ENCODE measurements at regions of chr17 and their contacts with region 1.

Region 1: GRCh38 chr17:10875979-10876555 is 38.2 kb upstream of the PIRT start:
- ATAC-seq: peak; percentile 49 to 86 (median 61)
- H3K4me3 ChIP-seq: no peak overlapping the region
- H3K27ac ChIP-seq: no peak overlapping the region
- H3K4me1 ChIP-seq: peaks cover 0 to 6% of the 10 kb centered on the region in 2 donors

Region 2: GRCh38 chr17:10646392-10646990 is 229.6 kb before region 1 on chr17:
- in situ Hi-C with region 1: loop called in 1 of 9 experiments (anchors 25 kb)
- ATAC-seq: peak; percentile 65 to 96 (median 78)
- H3K4me3 ChIP-seq: no peak overlapping the region
- H3K27ac ChIP-seq: no peak overlapping the region
- H3K4me1 ChIP-seq: peaks cover 0 to 3% of the 10 kb centered on the region in 2 donors

Region 3: DNA sequence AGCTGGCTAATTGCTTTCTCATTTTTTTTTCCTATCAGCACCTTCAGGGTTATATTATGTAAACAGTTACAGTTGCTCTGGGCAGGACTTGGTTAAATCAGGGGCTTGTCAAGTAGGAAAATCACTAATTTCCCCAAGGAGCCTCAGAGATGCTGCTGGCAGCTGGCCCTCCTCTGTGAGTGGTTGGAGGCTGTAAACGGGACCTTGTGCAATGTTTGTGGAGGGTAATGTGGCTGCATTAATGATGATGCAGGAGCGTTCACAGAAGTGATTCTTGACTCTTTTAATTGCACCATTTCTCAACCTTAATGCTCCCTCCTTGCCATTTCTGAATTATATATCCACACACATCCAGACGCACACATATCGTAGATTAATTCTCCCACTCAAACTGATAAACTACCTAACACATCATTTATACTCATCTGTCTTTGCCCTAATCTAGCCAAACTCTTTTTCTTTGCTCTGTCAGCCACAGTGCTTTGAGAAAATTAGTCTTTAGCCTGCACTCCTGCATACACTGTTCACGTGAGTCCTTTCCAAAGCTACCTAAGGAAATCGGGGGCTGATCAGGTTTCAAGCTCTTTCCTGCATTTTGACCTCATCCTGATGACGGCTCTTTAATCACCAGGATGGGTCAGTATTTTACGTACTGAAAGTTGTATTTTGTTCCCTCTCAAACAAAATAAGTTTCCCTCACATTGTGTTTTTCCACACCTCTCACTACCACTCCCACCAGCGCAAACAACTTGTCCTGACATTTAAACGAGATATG is 116.2 kb after region 1 on chr17:
- in situ Hi-C with region 1: no loop called
- ATAC-seq: peak in 4 of 8 experiments; percentile 90 to 97 (median 91)
- H3K4me3 ChIP-seq: no peak overlapping the region
- H3K27ac ChIP-seq: no peak overlapping the region
- H3K4me1 ChIP-seq: peaks cover 10 to 12% of the 10 kb centered on the region in 2 donors

Region 4: GRCh38 chr17:11144358-11145233 is 268.5 kb after region 1 on chr17:
- in situ Hi-C with region 1: loop called in 3 of 9 experiments (anchors 10 to 25 kb)
- ATAC-seq: peak in 4 of 8 experiments; percentile 30 to 87 (median 84)
- H3K4me3 ChIP-seq: no peak overlapping the region
- H3K27ac ChIP-seq: no peak overlapping the region
- H3K4me1 ChIP-seq: no peaks in the 10 kb centered on the region

Region 5: GRCh38 chr17:11151818-11152425 is 275.9 kb after region 1 on chr17:
- in situ Hi-C with region 1: loop called in 4 of 9 experiments (anchors 10 to 25 kb)
- ATAC-seq: peak in 1 of 8 experiments; percentile 90
- H3K4me3 ChIP-seq: no peak overlapping the region
- H3K27ac ChIP-seq: no peak overlapping the region
- H3K4me1 ChIP-seq: no peaks in the 10 kb centered on the region

Region 6: DNA sequence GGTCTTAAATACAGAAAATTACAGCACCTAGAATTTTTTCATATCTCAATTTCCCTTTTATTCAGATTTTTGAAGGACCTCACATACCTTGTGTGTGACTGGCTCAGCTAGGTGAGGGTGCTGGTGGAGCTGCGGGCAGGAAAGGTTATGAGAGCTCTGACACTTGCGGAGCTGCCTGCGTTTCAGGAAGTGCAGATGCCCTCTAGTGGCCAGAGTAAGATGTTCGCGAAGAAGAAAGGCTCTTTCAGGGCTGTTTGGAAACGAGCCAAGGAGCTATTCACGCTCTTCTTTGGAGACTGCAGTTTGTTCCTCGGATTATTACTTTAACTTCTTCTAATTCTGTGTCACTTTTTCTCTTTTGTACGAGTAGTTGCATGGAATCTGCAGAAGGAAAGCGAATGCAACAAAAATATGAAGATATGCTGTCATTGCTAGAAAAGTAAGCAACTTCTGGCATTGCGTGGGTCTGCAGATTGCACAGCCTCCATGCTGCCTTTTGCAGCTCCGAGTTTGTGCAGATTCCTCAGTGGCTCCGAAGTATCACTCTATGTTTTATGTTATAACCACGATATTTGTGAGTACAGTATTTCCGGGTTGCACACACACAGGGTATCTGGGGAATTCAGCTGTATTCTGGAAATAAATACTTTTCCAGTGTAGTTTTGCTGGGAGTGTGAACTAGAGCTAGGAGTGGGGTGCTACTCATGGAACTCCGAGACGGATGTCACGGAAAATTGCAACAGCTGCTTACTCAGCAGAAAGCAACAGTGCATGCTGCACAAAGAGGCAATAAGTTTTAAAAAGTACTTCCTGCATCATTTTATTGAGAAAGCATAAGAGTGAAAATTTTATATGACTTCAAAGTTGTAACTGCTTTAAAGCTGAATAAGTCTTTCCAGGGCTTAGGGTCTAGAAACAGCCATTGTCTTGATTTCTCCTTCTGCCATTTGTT is 768.5 kb after region 1 on chr17:
- in situ Hi-C with region 1: loop called in 1 of 9 experiments (anchors 25 kb)
- ATAC-seq: peak in 6 of 8 experiments; percentile 55 to 89 (median 83)
- H3K4me3 ChIP-seq: no peak overlapping the region
- H3K27ac ChIP-seq: no peak overlapping the region
- H3K4me1 ChIP-seq: peaks cover 17% of the 10 kb centered on the region in 2 donors

Region 7: GRCh38 chr17:11935734-11936406 is 1059.8 kb after region 1 on chr17:
- in situ Hi-C with region 1: loop called in 2 of 9 experiments (anchors 25 kb)
- ATAC-seq: peak in 2 of 8 experiments; percentile 36 to 46
- H3K4me3 ChIP-seq: no peak overlapping the region
- H3K27ac ChIP-seq: no peak overlapping the region
- H3K4me1 ChIP-seq: no peaks in the 10 kb centered on the region